GM12878 (cell line): ENCODE measurements at regions of chr22 and their contacts with region 1.

Region 1: GRCh38 chr22:47434336-47435203 is 672.1 kb downstream of the TBC1D22A start:
- DNase-seq: no peak
- ATAC-seq: no peak
- H3K4me3 ChIP-seq: no peak overlapping the region
- H3K27ac ChIP-seq: no peak overlapping the region
- H3K4me1 ChIP-seq: no peaks in the 10 kb centered on the region
- H3K27me3 ChIP-seq: no peaks in the 10 kb centered on the region
- CTCF ChIP-seq: no peak
- EP300 ChIP-seq: no peak
- POLR2A ChIP-seq: no peak
- RAD21 ChIP-seq: no peak

Region 2: GRCh38 chr22:47374901-47375575 is 59.5 kb before region 1 on chr22:
- CTCF ChIA-PET with region 1: no interaction called
- POLR2A ChIA-PET with region 1: no interaction called
- RAD21 ChIA-PET with region 1: no interaction called
- SMC1A ChIA-PET with region 1: no interaction called
- in situ Hi-C with region 1: loop called (anchors 5 kb)
- intact Hi-C with region 1: no loop called
- DNase-seq: no peak
- ATAC-seq: no peak
- H3K4me3 ChIP-seq: no peak overlapping the region
- H3K27ac ChIP-seq: no peak overlapping the region
- H3K4me1 ChIP-seq: no peaks in the 10 kb centered on the region
- H3K27me3 ChIP-seq: no peaks in the 10 kb centered on the region
- CTCF ChIP-seq: no peak
- EP300 ChIP-seq: no peak
- POLR2A ChIP-seq: no peak
- RAD21 ChIP-seq: no peak

Region 3: DNA sequence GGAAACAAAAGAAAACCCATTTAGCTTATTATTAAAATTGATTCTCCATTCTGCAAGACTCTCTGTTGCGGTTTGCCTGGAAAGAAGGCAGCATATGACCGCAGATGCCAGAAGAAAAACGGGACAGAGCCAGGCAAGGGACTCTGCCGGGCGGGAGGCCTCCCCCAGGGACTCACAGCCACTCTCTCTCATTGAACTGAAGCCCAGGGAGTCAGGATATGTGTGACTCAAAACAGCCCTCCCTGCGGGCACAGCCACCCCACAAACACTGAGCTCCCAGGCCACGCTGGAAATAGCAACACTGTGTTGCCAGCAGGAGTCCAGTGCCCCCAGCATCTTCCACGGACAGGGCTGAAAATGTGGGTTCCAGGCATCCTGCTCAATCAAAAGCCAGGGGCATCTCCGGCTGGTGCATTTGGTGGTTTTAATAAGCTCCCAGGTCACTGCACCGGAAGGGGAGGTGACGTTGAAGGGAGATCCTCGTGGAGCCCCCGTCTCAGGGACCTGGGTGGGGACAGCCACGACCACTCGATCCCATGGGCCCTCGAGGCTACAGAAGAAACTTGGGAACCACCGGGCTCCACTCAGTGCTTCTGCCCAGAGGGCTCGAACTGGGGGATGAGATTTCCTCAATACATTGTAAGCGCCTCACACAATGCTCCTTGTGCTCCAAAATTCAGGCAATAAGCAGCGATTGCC is 47.6 kb before region 1 on chr22:
- CTCF ChIA-PET with region 1: no interaction called
- POLR2A ChIA-PET with region 1: no interaction called
- RAD21 ChIA-PET with region 1: no interaction called
- SMC1A ChIA-PET with region 1: no interaction called
- in situ Hi-C with region 1: no loop called
- intact Hi-C with region 1: no loop called
- DNase-seq: no peak
- ATAC-seq: no peak
- H3K4me3 ChIP-seq: no peak overlapping the region
- H3K27ac ChIP-seq: no peak overlapping the region
- H3K4me1 ChIP-seq: no peaks in the 10 kb centered on the region
- H3K27me3 ChIP-seq: no peaks in the 10 kb centered on the region
- CTCF ChIP-seq: no peak
- EP300 ChIP-seq: no peak
- POLR2A ChIP-seq: no peak
- RAD21 ChIP-seq: no peak